ENCODE measurements at regions of chr9 and their contacts with region 1.

Region 1: DNA sequence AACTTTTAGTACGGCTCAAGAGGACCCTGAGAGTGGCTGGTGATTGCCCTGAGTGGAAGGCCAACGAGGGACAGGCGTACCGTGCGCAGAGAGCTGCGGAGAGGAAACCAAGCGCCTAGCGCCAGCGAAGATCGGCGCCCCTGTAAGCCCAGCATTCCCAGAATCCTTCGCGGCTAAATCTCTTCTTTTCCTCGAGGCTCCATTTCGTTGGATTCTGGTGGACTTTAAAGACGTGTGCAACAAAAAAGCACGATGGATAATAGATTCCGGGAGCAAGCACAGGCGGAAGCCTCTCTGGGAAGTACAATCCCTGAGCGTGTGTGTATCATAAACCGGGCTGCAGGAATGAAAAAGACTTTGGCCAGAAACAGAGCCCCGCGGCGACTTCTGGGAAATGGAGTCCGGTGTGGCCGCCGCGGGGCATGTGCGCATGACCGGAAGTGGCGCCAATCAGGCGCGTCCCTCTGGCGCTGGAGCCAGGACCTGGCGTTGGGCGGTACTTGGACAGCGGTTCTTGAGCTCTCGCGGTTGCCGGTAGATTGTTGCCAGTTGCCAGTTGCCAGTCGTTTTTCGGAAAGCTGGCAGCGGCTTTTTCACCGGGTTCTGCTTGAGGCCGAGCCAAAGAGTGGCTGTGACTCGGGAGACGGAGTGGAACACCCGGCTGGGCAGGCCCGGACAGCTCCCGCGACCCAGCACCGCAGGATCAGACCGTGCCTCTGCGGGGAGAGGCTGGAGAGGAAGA is at the start of gene ZNF79:
- DNase-seq: peak; percentile 93 to 95
- ATAC-seq: peak; percentile 96 to 100 (median 99)
- H3K4me3 ChIP-seq: peak within 1 kb of the TSS; percentile 67 to 100 (median 84)
- H3K27ac ChIP-seq: peak within 1 kb of the TSS; percentile 81 to 95 (median 88)
- H3K4me1 ChIP-seq: peaks cover 13 to 49% (median 36%) of the 10 kb centered on the region in 9 donors
- H3K27me3 ChIP-seq: no peaks in the 10 kb centered on the region
- CTCF ChIP-seq: peak in 1 of 9 donors; percentile 8
- total RNA-seq, gene ZNF79: 4.4 to 8.3 (median 6.4) TPM

Region 2: DNA sequence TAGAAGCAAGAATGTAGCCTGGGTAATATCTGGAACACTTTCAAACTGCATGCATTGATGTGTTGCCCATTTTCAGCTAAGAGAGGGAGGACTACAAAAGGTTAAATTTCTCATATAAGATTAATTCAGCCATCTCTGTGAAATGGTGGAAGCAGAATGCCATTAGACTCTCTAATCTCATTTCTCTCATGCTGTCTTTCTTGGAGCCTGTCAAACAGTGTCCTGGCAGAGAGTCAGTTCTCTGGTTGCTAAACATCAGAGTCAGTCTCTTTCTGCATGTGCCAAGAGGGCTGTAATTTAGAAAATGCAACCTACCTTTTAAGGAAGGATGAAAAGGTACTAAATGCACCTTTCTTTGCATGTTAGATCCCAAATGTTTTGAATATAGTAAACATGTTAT is 160.4 kb before region 1 on chr9:
- intact Hi-C with region 1: no loop called
- DNase-seq: peak in 1 of 2 donors; percentile 50
- ATAC-seq: peak in 6 of 8 donors; percentile 50 to 83 (median 74)
- H3K4me3 ChIP-seq: peak overlapping the region in 6 of 10 donors; percentile 25 to 49 (median 44)
- H3K27ac ChIP-seq: peak overlapping the region in 6 of 10 donors; percentile 63 to 80 (median 72)
- H3K4me1 ChIP-seq: peaks cover 0 to 47% (median 21%) of the 10 kb centered on the region in 9 donors
- H3K27me3 ChIP-seq: no peaks in the 10 kb centered on the region
- CTCF ChIP-seq: no peak

Region 3: DNA sequence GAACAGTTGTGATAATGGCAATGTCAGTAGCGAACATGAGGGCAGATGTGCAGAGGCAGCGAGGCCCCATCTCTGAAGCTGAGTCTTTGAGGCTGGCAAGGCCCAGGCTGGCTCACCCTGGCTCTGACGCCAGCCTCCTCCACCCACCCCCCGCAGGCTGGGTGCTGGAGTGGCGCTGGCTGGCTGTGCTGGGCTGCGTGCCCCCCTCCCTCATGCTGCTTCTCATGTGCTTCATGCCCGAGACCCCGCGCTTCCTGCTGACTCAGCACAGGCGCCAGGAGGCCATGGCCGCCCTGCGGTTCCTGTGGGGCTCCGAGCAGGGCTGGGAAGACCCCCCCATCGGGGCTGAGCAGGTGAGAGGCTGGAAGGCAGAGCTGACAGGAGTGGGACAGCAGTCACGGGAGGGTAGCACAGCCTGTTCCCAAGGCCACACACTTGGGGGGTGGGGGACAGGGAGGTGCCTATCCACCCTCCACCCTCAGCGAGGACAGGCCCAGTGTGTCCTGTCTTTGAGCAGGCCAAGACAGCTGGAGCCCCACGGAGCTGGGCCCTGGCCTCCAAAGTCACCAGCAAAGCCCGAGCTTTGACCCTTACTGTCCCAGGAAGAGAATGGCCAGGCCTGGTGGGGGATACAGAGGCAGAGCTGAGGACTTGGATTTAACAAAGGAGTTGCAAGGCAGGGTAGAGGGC is 21.6 kb before region 1 on chr9:
- intact Hi-C with region 1: loop called in 1 of 10 experiments (anchors 1 kb)
- DNase-seq: no peak
- ATAC-seq: no peak
- H3K4me3 ChIP-seq: no peak overlapping the region
- H3K27ac ChIP-seq: no peak overlapping the region
- H3K4me1 ChIP-seq: peaks cover 0 to 30% (median 25%) of the 10 kb centered on the region in 9 donors
- H3K27me3 ChIP-seq: no peaks in the 10 kb centered on the region
- CTCF ChIP-seq: no peak

Region 4: GRCh38 chr9:127450830-127451724 is 27.0 kb after region 1 on chr9 and contains the starts of genes LRSAM1 and RPL12:
- intact Hi-C with region 1: loop called in 1 of 10 experiments (anchors 2 kb)
- DNase-seq: peak; percentile 97 to 98
- ATAC-seq: peak; percentile 80 to 94 (median 88)
- H3K4me3 ChIP-seq: peak within 1 kb of the TSS; percentile 58 to 99 (median 89)
- H3K27ac ChIP-seq: peak within 1 kb of the TSS; percentile 85 to 98 (median 95)
- H3K4me1 ChIP-seq: peaks cover 3 to 62% (median 52%) of the 10 kb centered on the region in 9 donors
- H3K27me3 ChIP-seq: no peaks in the 10 kb centered on the region
- CTCF ChIP-seq: peak in 3 of 9 donors; percentile 21 to 37 (median 26)
- total RNA-seq, gene LRSAM1: 24.9 to 49.6 (median 29.5) TPM
- total RNA-seq, gene RPL12: 409 to 810 (median 499) TPM

Measured in heart right ventricle (tissue), 16 donors.